ENCODE measurements at regions of chr11 and their contacts with region 1.

Region 1: GRCh38 chr11:27183672-27184457 is 143.2 kb downstream of the BBOX1 start:
- DNase-seq: peak; percentile 33 to 56
- H3K4me3 ChIP-seq: no peak overlapping the region
- H3K27ac ChIP-seq: no peak overlapping the region
- H3K4me1 ChIP-seq: no peaks in the 10 kb centered on the region
- H3K27me3 ChIP-seq: no peaks in the 10 kb centered on the region
- CTCF ChIP-seq: peak; percentile 86

Region 2: DNA sequence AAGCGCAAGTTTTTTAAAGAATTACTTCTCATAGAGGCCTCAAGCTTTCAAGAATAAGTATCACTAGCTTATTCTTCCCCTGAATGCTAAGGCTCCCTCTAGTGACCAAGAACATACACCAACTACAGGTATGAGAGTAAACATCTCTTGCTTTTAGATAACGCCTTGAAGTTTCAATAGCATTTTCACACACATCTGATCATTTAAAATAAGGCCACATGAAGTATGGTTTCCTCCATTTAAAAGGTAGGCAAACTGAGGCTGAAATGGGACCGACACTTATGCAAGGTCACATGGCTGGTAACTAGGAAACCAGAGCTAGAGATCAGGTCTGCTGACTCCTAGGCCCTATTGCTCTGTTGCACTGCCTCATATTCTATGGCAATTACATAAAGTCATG is 112.6 kb after region 1 on chr11:
- CTCF ChIA-PET with region 1: interaction called, 13 read pairs
- POLR2A ChIA-PET with region 1: no interaction called
- intact Hi-C with region 1: loop called (anchors 1 kb)
- DNase-seq: peak in 1 of 2 experiments; percentile 4
- H3K4me3 ChIP-seq: no peak overlapping the region
- H3K27ac ChIP-seq: no peak overlapping the region
- H3K4me1 ChIP-seq: no peaks in the 10 kb centered on the region
- H3K27me3 ChIP-seq: no peaks in the 10 kb centered on the region
- CTCF ChIP-seq: peak; percentile 74

Region 3: DNA sequence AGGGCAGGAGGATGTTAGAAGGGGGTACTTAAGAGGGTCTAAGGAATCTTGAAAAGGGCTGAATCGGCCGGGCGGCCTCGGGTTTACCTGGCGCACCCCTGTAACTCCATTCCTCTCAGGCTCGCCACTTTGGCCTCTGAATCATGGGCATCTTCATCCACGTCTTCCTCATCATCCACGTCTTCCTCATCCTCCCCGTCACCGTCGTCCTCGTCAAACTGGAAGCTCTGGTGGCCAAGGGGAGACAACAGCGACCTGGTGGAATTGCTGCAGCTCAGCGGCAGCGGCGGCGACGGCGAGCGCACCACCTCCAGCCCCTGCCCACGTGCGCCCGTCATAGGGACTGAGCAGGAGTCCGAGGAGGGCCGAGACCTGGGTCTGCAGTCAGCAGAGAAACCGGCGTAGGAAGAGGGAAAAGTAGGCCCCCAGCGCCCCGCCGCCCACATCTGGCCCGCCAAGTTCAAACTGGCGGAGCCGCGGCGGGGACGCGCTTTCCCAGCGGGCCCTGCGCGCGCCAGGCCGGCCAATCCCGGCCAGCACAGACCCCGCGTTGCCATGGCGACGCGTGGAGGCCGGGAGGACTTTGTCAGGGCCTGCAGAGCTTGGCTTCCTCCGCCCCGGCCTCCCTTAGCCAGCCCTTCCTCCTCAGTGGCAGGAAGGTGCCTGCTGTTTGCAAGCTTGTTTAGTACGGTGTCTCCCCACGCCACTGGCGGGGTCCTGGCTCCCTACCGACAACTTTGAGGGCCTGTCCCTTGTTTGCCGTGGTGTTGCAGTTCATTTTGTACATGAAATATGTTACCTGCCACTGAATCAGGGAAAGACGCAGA is 179.1 kb after region 1 on chr11 and contains the start of gene CCDC34:
- CTCF ChIA-PET with region 1: no interaction called
- POLR2A ChIA-PET with region 1: interaction called, 4 read pairs
- intact Hi-C with region 1: loop called (anchors 5 kb)
- DNase-seq: peak; percentile 80 to 90
- H3K4me3 ChIP-seq: peak within 1 kb of the TSS; percentile 75
- H3K27ac ChIP-seq: peak within 1 kb of the TSS; percentile 13; the same call in 1 of the 2 replicates
- H3K4me1 ChIP-seq: peaks cover 24% of the 10 kb centered on the region; the same call in 1 of the 2 replicates
- H3K27me3 ChIP-seq: no peaks in the 10 kb centered on the region
- CTCF ChIP-seq: no peak
- total RNA-seq, gene CCDC34: 21.0 and 33.6 TPM in 2 replicates

Measured in PC-9 (cell line).